Mammary epithelial cell (primary cell): ENCODE measurements at regions of chr11 and their contacts with region 1.

Region 1: GRCh38 chr11:66119348-66120133 is 49.5 kb downstream of the PACS1 start:
- DNase-seq: peak; percentile 77
- H3K4me3 ChIP-seq: no peak overlapping the region
- H3K27ac ChIP-seq: peak overlapping the region; percentile 54
- H3K4me1 ChIP-seq: peaks cover 18% of the 10 kb centered on the region
- H3K27me3 ChIP-seq: no peaks in the 10 kb centered on the region
- CTCF ChIP-seq: no peak

Region 2: GRCh38 chr11:66081505-66081904 is 38.0 kb before region 1 on chr11:
- CTCF ChIA-PET with region 1: no interaction called
- dilution Hi-C with region 1: loop called (anchors 5 kb)
- in situ Hi-C with region 1: no loop called
- intact Hi-C with region 1: no loop called
- DNase-seq: peak; percentile 77
- H3K4me3 ChIP-seq: no peak overlapping the region
- H3K27ac ChIP-seq: peak overlapping the region; percentile 43
- H3K4me1 ChIP-seq: peaks cover 21% of the 10 kb centered on the region
- H3K27me3 ChIP-seq: no peaks in the 10 kb centered on the region
- CTCF ChIP-seq: no peak

Region 3: GRCh38 chr11:66157179-66157864 is 37.8 kb after region 1 on chr11:
- CTCF ChIA-PET with region 1: interaction called, 3 read pairs
- dilution Hi-C with region 1: loop called (anchors 5 kb)
- in situ Hi-C with region 1: no loop called
- intact Hi-C with region 1: no loop called
- DNase-seq: no peak
- H3K4me3 ChIP-seq: no peak overlapping the region
- H3K27ac ChIP-seq: no peak overlapping the region
- H3K4me1 ChIP-seq: no peaks in the 10 kb centered on the region
- H3K27me3 ChIP-seq: no peaks in the 10 kb centered on the region
- CTCF ChIP-seq: no peak

Region 4: DNA sequence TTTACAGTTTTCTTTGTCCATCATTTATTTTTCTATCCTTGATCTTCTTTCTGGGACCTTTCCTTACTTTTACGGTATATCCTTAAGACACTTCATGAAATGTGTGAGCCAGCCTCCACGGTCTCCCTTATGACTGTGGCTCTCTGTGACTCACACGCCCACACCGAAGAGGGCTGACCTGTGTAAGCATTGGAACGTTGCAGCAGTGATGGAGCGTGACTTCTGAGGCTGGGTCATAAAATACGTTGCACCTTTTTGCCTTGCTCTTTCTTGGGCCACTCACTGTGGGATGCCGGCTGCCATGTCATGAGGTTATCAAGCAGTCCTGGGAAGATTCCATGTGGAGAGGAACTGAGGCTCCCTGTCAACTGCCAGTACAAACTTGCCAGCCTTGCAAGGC is 52.6 kb after region 1 on chr11:
- CTCF ChIA-PET with region 1: no interaction called
- dilution Hi-C with region 1: no loop called
- in situ Hi-C with region 1: loop called in 1 of 2 experiments (anchors 5 kb)
- intact Hi-C with region 1: no loop called
- DNase-seq: peak; percentile 58
- H3K4me3 ChIP-seq: no peak overlapping the region
- H3K27ac ChIP-seq: no peak overlapping the region
- H3K4me1 ChIP-seq: peaks cover 5% of the 10 kb centered on the region
- H3K27me3 ChIP-seq: no peaks in the 10 kb centered on the region
- CTCF ChIP-seq: no peak